Heart right ventricle (tissue), 16 donors: ENCODE measurements at regions of chr7 and their contacts with region 1.

Region 1: GRCh38 chr7:74068393-74069085 is 15.1 kb upstream of the LIMK1 start:
- DNase-seq: no peak
- ATAC-seq: peak in 1 of 8 donors; percentile 13
- H3K4me3 ChIP-seq: no peak overlapping the region
- H3K27ac ChIP-seq: no peak overlapping the region
- H3K4me1 ChIP-seq: no peaks in the 10 kb centered on the region
- H3K27me3 ChIP-seq: no peaks in the 10 kb centered on the region
- CTCF ChIP-seq: no peak

Region 2: GRCh38 chr7:74149603-74150002 is 81.1 kb after region 1 on chr7:
- intact Hi-C with region 1: loop called in 1 of 10 experiments (anchors 10 kb)
- DNase-seq: no peak
- ATAC-seq: no peak
- H3K4me3 ChIP-seq: no peak overlapping the region
- H3K27ac ChIP-seq: no peak overlapping the region
- H3K4me1 ChIP-seq: peaks cover 0 to 8% (median 0%) of the 10 kb centered on the region in 9 donors
- H3K27me3 ChIP-seq: no peaks in the 10 kb centered on the region
- CTCF ChIP-seq: no peak

Region 3: GRCh38 chr7:74206589-74207120 is 138.1 kb after region 1 on chr7:
- intact Hi-C with region 1: loop called in 4 of 10 experiments (anchors 2 to 5 kb)
- DNase-seq: peak; percentile 87 to 91
- ATAC-seq: peak; percentile 80 to 89 (median 85)
- H3K4me3 ChIP-seq: peak overlapping the region in 6 of 10 donors; percentile 22 to 43 (median 30)
- H3K27ac ChIP-seq: no peak overlapping the region
- H3K4me1 ChIP-seq: peaks cover 0 to 33% (median 0%) of the 10 kb centered on the region in 9 donors
- H3K27me3 ChIP-seq: no peaks in the 10 kb centered on the region
- CTCF ChIP-seq: peak; percentile 87 to 99 (median 98)

Region 4: DNA sequence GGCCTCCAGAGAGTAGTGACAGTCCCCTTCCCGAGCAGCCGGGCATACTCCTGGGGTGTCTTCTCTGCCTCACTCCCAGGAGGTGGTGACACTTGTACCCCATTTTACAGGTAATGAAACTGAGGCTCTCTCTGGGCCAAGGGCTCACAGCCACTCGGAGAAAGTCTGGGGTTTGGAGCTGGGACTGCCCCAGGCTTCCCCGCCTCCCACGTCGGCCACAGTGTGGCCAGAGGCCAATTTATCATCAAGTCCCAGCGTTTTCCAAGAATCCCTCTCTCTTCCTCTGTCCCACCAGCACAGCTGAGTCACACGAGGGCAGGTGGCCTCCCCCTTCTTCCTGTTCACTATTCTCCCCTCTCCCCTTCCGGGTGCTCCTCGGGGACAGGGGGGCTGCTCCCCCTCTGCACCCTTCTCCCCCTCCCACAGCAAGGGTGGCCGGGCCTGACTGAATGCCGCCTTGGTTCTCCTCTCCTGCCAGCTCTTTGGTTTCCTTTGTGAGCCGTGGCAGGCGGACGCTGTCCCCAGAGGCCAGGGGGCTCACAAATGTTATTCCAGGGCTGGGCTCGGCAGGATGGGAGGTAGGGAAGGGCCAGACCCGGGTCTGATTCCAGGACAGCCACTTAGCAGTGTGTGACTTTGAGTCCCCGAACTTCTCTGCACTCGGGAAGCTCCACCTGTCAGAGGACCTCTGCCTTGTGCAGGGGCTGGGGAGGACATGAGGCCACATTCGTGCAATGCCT is 238.4 kb after region 1 on chr7:
- intact Hi-C with region 1: no loop called
- DNase-seq: peak; percentile 52 to 70
- ATAC-seq: peak; percentile 61 to 91 (median 83)
- H3K4me3 ChIP-seq: peak overlapping the region in 8 of 10 donors; percentile 10 to 34 (median 22)
- H3K27ac ChIP-seq: peak overlapping the region in 5 of 10 donors; percentile 9 to 60 (median 39)
- H3K4me1 ChIP-seq: peaks cover 12 to 34% (median 20%) of the 10 kb centered on the region in 9 donors
- H3K27me3 ChIP-seq: peaks cover 0 to 11% (median 0%) of the 10 kb centered on the region in 7 donors
- CTCF ChIP-seq: no peak